PC-9 (cell line): ENCODE measurements at regions of chr2 and their contacts with region 1.

Region 1: DNA sequence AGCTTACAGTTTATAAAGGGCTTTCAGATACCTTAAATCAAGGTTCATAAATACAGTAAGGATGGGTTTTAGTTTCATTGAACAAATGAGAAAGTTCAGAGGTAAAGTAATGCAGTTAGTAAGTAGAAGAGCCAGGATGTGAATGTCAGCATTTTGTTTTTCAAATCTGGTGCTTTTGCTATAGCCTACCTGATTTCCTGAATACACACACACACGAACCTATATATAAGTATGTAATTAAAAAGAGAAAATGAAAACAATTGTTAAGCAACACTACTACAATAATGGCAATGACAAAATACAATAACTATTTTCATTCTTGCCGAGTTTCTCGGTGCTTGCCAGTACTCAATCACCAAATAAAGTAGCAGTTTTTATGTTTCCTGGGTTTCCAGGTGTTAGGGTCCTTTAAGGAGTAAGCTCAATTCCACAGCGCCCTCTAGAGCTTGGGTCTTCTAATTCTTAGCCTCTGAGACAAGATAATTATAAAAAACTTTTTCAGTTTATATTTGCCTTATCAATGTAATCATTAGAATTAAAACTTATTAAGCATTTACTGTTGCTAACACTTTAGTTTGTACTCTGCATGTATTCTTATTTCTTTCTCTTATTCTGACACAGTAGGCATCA is 512.9 kb upstream of the ACVR2A start:
- DNase-seq: peak in 1 of 2 experiments; percentile 10
- H3K4me3 ChIP-seq: no peak overlapping the region
- H3K27ac ChIP-seq: no peak overlapping the region
- H3K4me1 ChIP-seq: no peaks in the 10 kb centered on the region
- H3K27me3 ChIP-seq: no peaks in the 10 kb centered on the region
- CTCF ChIP-seq: peak; percentile 67

Region 2: GRCh38 chr2:146927080-146927711 is 404.7 kb before region 1 on chr2:
- CTCF ChIA-PET with region 1: no interaction called
- POLR2A ChIA-PET with region 1: no interaction called
- intact Hi-C with region 1: loop called (anchors 5 kb)
- DNase-seq: peak in 1 of 2 experiments; percentile 49
- H3K4me3 ChIP-seq: no peak overlapping the region
- H3K27ac ChIP-seq: no peak overlapping the region
- H3K4me1 ChIP-seq: no peaks in the 10 kb centered on the region
- H3K27me3 ChIP-seq: no peaks in the 10 kb centered on the region
- CTCF ChIP-seq: peak; percentile 61